Activated T-helper 2 cell treated with anti-CD3 and anti-CD28 coated beads, Interferon-gamma antibody, Interleukin-2, Interleukin-4, amounts not matched to agents 10 μg/mL and 5 μg/mL and 100 μg/mL, durations not matched to agents 14 hours and 24 hours and 36 hours (primary cell): ENCODE measurements at regions of chr16 and their contacts with region 1.

Region 1: DNA sequence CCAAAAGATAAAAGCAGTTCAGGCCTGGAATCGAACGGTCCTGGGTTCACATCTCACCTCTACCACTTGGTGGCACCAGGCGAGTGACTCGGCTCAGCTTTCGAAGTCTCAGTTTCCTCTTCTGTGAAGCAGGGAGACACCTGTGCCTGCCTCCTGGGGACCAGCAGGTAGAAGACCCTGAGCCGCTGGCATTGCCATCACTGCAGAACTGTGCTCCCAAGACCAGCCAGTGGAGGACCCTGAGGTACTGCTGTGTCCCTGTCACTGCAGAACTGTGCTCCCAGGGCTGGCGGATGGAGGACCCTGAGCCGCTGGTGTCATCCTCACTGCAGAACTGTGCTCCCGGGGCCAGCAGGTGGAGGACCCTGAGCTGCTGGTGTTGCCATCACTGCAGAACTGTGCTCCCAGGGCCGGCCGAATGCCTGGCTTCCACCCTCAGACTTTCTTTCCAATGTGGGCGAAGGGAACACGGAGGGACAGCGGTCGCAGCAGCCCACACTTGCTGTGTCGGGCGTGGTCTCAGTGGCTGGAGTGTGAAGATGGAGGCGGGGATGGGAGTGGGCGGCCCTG is 8.7 kb upstream of the SLC7A5 start:
- DNase-seq: peak; percentile 32
- H3K4me3 Mint-ChIP-seq: no peak overlapping the region
- H3K27ac Mint-ChIP-seq: peak overlapping the region; percentile 75
- H3K4me1 Mint-ChIP-seq: peaks cover 52% of the 10 kb centered on the region
- H3K27me3 Mint-ChIP-seq: no peaks in the 10 kb centered on the region

Region 2: DNA sequence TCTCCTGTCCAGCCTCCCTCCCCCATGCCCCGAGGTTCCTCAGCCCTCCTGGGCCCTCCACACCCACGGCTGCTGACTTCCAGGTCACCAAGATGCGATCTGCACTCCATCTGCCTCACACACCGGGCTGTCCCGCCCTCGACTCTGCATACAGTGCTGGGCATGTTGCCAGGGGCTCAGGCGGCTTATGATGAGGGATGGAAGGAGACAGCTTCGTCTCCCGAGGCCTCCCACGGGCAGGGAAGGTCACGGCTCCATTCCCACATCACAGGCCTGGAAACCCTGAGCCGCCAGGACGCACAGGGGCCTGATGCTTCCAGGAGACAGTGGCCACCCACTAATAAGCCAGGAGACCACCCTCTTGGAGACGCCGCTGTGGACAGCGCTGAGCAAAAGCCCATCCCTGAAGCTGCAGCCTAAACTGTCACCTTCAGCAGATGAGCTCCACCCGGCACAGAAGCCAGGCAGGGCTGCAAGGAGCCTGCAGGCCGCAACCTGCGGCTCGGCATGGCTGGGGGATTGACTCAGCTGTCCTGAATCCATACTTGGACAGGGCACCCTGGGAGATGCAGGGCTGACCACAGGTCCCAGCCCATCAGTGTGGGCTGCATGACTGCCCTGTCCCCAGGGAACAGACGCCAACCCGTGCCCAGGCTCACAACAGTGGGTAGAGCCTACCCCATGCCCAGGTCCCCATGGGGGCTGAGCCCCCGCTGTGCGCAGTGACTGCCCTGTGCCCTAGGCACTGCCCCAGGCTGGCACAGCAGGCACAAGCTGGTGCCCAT is 43.2 kb before region 1 on chr16:
- intact Hi-C with region 1: no loop called
- DNase-seq: no peak
- H3K4me3 Mint-ChIP-seq: no peak overlapping the region
- H3K27ac Mint-ChIP-seq: no peak overlapping the region
- H3K4me1 Mint-ChIP-seq: no peaks in the 10 kb centered on the region
- H3K27me3 Mint-ChIP-seq: no peaks in the 10 kb centered on the region

Region 3: DNA sequence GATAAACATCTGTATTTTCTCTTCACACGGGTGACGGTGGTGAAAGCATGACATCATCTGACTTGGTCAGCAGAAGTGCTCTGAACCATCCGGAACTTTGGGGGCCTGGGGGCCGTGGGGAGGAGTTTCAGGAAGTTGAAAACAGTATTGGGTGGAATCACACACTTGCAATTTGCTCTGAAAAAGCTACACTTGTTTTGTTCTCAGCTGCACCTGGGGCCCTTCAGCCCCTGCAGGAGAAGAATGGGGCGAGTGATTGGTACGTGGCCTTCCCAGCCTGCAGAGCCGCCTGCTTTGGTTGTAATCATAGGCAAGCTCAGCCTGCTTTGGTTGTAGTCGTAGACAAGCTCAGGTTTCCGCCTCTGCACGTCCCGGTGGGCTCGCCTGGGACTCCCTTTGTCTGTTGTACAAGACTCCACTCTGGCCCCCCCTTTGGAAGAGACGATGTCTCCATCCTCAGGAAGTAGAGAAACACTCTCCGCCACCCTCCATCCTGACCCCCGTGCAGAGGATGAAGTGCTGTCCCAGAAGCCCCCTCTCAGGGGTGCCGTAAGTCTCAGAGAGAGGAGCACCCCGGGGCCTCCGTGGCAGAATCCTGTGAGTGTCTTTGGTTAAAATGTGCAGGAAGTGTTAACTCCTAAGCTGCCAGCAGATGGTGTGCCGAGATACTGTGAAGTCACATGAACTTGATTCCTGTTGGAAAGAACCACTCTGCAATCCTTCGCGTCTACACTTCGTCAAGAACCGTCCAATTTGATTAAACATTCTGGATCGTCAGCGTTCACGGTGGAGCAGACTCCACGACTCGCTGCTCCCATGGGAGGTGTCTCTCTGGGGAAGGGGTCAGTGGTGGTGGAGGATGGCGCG is 78.6 kb after region 1 on chr16:
- intact Hi-C with region 1: loop called (anchors 5 kb)
- DNase-seq: peak; percentile 77
- H3K4me3 Mint-ChIP-seq: peak overlapping the region; percentile 80
- H3K27ac Mint-ChIP-seq: peak overlapping the region; percentile 97
- H3K4me1 Mint-ChIP-seq: peaks cover 75% of the 10 kb centered on the region
- H3K27me3 Mint-ChIP-seq: no peaks in the 10 kb centered on the region